Heart right ventricle (tissue), 16 donors: ENCODE measurements at regions of chr12 and their contacts with region 1.

Region 1: DNA sequence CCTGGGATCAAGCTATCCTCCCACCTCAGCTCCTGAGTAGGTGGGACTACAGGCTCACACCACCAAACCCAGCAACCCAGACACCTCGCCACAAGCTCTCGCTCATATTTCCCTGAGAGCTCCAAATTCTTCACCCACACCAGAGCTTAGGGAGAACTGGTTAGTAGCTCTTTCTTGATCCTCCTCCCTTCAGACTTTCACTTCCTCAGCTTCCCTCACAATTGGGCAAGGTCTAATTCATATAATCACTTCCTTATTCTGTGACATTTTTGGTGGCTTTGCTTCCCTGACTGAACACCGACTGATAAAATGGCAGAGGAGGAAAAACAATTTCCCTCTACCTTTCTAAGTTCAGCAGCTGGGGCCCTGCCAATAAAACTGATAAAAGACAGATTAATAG is 88.5 kb downstream of the GXYLT1 start:
- DNase-seq: no peak
- ATAC-seq: peak in 2 of 8 donors; percentile 37 to 42
- H3K4me3 ChIP-seq: no peak overlapping the region
- H3K27ac ChIP-seq: no peak overlapping the region
- H3K4me1 ChIP-seq: peaks cover 0 to 3% (median 0%) of the 10 kb centered on the region in 9 donors
- H3K27me3 ChIP-seq: no peaks in the 10 kb centered on the region
- CTCF ChIP-seq: no peak

Region 2: GRCh38 chr12:41846718-41847117 is 209.4 kb before region 1 on chr12:
- intact Hi-C with region 1: loop called in 1 of 10 experiments (anchors 5 kb)
- DNase-seq: no peak
- ATAC-seq: no peak
- H3K4me3 ChIP-seq: no peak overlapping the region
- H3K27ac ChIP-seq: no peak overlapping the region
- H3K4me1 ChIP-seq: peaks cover 0 to 5% (median 0%) of the 10 kb centered on the region in 9 donors
- H3K27me3 ChIP-seq: no peaks in the 10 kb centered on the region
- CTCF ChIP-seq: no peak